ENCODE measurements at regions of chr9 and their contacts with region 1.

Region 1: DNA sequence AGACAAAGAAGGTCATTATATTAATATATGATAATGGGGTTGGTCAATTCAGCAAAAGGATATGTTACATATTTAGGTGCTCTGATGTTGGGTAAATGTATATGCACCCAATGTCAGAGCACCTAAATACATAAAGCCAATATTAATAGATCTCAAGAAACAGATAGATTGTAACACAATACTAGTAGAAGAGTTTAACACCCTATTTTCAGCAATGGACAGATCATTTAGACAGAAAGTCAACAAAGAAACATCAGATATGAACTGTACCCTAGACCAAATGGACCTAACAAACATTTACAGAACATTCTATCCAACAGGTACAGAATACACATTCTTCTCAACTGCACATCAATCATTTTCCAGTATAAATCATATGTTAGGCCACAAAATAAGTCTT is 35.2 kb downstream of the FANCC start:
- H3K4me3 ChIP-seq: no peak overlapping the region
- H3K27ac ChIP-seq: no peak overlapping the region
- H3K4me1 ChIP-seq: no peaks in the 10 kb centered on the region
- CTCF ChIP-seq: no peak

Region 2: DNA sequence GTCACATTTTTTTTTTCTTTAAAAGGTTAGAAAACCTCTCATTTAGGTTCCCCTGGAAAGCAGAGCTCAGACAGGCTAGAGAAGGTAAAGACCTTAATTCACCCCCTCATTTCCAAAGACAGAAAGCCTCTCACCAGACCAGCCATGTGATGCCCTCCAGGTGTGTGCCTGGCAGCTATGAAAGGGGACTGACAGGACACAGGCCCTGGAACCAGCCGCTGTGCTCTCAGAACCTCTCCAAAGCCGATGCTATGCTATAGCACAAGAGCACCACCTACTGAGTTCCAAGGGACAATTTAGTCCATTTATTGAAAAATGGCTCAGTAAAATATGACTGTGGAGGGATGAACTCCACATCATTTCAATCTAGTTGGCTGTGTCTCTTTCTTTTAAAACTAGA is 13.6 kb before region 1 on chr9:
- CTCF ChIA-PET with region 1: interaction called, 16 read pairs
- POLR2A ChIA-PET with region 1: no interaction called
- H3K4me3 ChIP-seq: no peak overlapping the region
- H3K27ac ChIP-seq: no peak overlapping the region
- H3K4me1 ChIP-seq: no peaks in the 10 kb centered on the region
- CTCF ChIP-seq: peak; percentile 34; the same call in 1 of the 2 replicates